ENCODE measurements at regions of chr5 and their contacts with region 1.

Region 1: DNA sequence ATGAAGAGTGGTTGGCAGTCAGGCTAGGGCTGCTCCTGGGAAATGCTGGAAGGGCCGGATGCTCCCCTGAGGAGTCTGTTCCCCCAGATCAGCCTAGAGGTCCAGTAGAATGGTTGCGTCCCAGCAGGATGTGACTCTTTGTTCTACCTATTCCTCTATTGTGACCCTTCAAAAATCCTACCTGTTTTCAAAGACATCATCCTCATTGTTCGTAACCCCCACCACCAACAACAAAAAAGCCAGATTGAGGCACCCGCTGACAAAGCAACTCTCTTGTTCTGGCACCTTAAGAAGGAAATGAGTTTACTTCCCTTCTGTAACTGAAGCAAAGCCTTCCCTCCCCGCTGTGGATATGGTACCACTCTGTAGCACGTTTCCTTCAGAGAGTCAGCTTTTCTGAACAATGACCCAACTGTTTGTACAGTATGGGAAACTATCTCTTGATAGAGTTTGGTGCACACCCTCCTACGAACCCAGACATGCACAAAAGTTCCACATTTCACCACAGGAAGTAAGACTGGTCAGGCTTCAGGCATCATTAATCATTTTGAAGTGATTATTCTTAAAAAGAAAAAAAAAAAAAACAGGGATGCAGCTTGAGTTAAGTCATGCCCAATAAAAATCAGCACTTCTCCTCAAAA is 207.2 kb downstream of the ENC1 start:
- DNase-seq: no peak
- ATAC-seq: peak; percentile 71

Region 2: DNA sequence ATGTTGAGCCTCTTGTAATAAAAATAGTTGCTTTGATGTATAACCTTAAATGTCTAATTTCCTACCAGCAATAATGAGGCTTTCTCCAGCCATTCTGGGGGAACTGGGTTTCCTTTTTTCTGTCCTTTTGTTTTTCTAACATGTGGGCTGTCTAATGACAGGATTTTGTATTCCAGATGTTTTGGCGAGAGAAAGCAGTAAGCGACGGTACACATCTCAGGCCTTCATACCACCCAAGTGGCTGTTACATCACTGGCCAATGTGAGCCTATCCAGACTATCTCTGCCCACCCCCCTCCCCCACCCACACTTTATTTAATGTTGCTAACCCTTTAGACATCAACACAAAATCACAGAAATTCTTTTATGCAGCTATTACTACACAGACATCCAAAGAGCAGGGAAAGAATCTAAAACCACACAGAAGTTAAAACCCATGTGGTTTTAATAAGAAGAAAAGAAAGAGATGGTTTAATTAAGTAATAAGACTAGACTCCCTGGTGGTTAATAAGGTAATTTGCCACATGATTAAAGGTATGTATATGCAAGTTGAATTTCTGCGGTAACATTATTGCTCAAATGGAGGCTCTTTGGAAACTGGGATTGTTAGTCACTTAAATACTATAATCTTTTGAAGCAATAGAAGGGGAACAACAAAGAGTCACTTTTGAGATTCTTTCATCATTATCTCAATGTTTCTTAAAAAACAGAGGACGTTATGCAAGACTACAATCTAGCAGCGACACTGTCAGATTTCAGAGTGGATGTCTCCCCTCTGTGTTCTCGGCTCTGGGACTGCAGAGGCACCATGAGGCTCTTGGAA is 158.0 kb before region 1 on chr5:
- intact Hi-C with region 1: loop called (anchors 5 kb)
- DNase-seq: no peak
- ATAC-seq: peak; percentile 68

Measured in Right ventricle myocardium inferior (tissue), 1 donor.